ENCODE measurements at regions of chr1 and their contacts with region 1.

Region 1: GRCh38 chr1:235843461-235843961 is 23.2 kb downstream of the LYST start:
- H3K4me3 ChIP-seq: no peak overlapping the region
- H3K27ac ChIP-seq: no peak overlapping the region
- H3K4me1 ChIP-seq: peaks cover 2% of the 10 kb centered on the region; the same call in 1 of the 2 replicates
- CTCF ChIP-seq: no peak; the same call in 1 of the 2 replicates

Region 2: DNA sequence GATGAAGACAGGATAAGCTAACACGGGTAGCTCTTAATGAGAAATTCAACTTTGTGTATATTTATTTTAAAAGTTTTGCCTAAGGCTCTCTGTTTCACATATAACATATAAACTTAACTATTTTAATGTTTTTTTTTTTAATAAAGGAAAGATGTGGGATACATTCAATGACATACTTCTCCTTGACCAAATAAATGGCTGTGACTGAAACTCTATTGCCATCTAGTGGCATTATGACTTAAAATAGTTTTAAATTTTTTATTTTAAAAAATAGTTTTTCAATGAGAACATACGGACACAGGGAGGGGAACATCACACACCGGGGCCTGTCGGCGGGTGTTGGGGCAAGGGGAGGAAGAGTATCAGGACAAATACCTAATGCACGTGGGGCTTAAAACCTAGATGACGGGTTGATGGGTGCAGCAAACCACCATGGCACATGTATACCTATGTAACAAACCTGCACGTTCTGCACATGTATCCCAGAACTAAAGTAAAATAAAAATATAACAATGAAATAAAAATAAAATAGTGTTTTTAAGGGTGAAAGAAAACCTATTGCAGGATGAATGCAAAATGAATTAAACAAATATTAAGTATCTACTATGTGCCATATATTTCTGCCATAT is 60.2 kb before region 1 on chr1:
- CTCF ChIA-PET with region 1: interaction called, 16 read pairs
- POLR2A ChIA-PET with region 1: no interaction called
- H3K4me3 ChIP-seq: no peak overlapping the region
- H3K27ac ChIP-seq: no peak overlapping the region
- H3K4me1 ChIP-seq: no peaks in the 10 kb centered on the region
- CTCF ChIP-seq: peak; percentile 36; the same call in 1 of the 2 replicates

Region 3: DNA sequence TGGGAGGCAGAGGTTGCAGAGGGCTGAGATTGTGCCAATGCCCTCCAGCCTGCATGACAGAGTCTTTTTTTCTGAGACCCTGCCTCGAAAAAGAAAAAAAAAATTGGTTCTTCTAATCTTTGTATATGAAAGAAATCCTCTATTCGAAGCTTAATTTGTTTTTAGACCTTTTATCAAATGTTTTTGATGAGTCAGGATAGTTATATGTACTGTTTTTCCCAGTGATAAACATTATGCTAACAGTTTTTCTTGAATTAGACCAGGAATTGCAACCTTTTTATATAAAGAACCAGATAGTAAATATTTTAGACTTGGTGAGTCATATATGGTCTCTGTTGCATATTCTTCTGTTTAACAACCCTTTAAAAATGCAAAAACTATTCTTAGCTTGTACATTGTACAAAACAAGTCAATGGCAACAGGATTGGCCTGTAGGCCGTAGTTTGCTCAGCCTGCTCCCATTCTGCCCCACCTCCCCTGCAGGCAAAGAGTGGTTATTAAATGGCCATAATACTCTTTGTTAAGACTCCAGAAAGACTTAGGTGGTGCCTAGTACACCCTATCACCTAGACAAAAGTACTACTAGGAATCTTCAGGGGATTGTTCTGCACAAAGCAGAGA is 22.0 kb before region 1 on chr1:
- CTCF ChIA-PET with region 1: interaction called, 11 read pairs
- POLR2A ChIA-PET with region 1: no interaction called
- H3K4me3 ChIP-seq: no peak overlapping the region
- H3K27ac ChIP-seq: no peak overlapping the region
- H3K4me1 ChIP-seq: no peaks in the 10 kb centered on the region
- CTCF ChIP-seq: no peak

Region 4: GRCh38 chr1:235831148-235831547 is 12.4 kb before region 1 on chr1:
- CTCF ChIA-PET with region 1: interaction called, 79 read pairs
- POLR2A ChIA-PET with region 1: interaction called, 3 read pairs
- H3K4me3 ChIP-seq: no peak overlapping the region
- H3K27ac ChIP-seq: no peak overlapping the region
- H3K4me1 ChIP-seq: no peaks in the 10 kb centered on the region
- CTCF ChIP-seq: no peak

Region 5: GRCh38 chr1:235855811-235856429 is 12.4 kb after region 1 on chr1:
- CTCF ChIA-PET with region 1: interaction called, 21 read pairs
- POLR2A ChIA-PET with region 1: no interaction called
- H3K4me3 ChIP-seq: no peak overlapping the region
- H3K27ac ChIP-seq: no peak overlapping the region
- H3K4me1 ChIP-seq: peaks cover 5% of the 10 kb centered on the region; the same call in 1 of the 2 replicates
- CTCF ChIP-seq: no peak

Region 6: GRCh38 chr1:235866913-235867845 is 23.7 kb after region 1 on chr1:
- CTCF ChIA-PET with region 1: interaction called, 14 read pairs
- POLR2A ChIA-PET with region 1: interaction called, 3 read pairs
- H3K4me3 ChIP-seq: peak overlapping the region; percentile 70
- H3K27ac ChIP-seq: peak overlapping the region; percentile 73
- H3K4me1 ChIP-seq: peaks cover 9% of the 10 kb centered on the region; the same call in 1 of the 2 replicates
- CTCF ChIP-seq: no peak

Region 7: GRCh38 chr1:236156512-236157208 is 313.1 kb after region 1 on chr1:
- CTCF ChIA-PET with region 1: no interaction called
- POLR2A ChIA-PET with region 1: no interaction called
- H3K4me3 ChIP-seq: no peak overlapping the region
- H3K27ac ChIP-seq: no peak overlapping the region
- H3K4me1 ChIP-seq: no peaks in the 10 kb centered on the region
- CTCF ChIP-seq: no peak

Measured in HEK293 (cell line).